Mammary epithelial cell (primary cell): ENCODE measurements at regions of chr3 and their contacts with region 1.

Region 1: GRCh38 chr3:113745273-113746068 is 578 bp downstream of the NAA50 start:
- DNase-seq: peak; percentile 92
- H3K4me3 ChIP-seq: peak overlapping the region; percentile 62 to 97 (median 90)
- H3K27ac ChIP-seq: peak overlapping the region; percentile 97
- H3K4me1 ChIP-seq: peaks cover 32% of the 10 kb centered on the region
- H3K27me3 ChIP-seq: no peaks in the 10 kb centered on the region
- CTCF ChIP-seq: peak; percentile 71 to 73

Region 2: GRCh38 chr3:112773864-112774590 is 971.4 kb before region 1 on chr3:
- CTCF ChIA-PET with region 1: no interaction called
- dilution Hi-C with region 1: no loop called
- in situ Hi-C with region 1: no loop called
- intact Hi-C with region 1: loop called (anchors 10 kb)
- DNase-seq: peak; percentile 97
- H3K4me3 ChIP-seq: no peak overlapping the region
- H3K27ac ChIP-seq: peak overlapping the region; percentile 95
- H3K4me1 ChIP-seq: peaks cover 65% of the 10 kb centered on the region
- H3K27me3 ChIP-seq: no peaks in the 10 kb centered on the region
- CTCF ChIP-seq: no peak

Region 3: GRCh38 chr3:113495035-113495434 is 250.4 kb before region 1 on chr3:
- CTCF ChIA-PET with region 1: interaction called, 4 read pairs
- dilution Hi-C with region 1: no loop called
- in situ Hi-C with region 1: no loop called
- intact Hi-C with region 1: loop called (anchors 1 kb)
- DNase-seq: peak; percentile 27
- H3K4me3 ChIP-seq: no peak overlapping the region
- H3K27ac ChIP-seq: no peak overlapping the region
- H3K4me1 ChIP-seq: no peaks in the 10 kb centered on the region
- H3K27me3 ChIP-seq: no peaks in the 10 kb centered on the region
- CTCF ChIP-seq: peak; percentile 37 to 56

Region 4: DNA sequence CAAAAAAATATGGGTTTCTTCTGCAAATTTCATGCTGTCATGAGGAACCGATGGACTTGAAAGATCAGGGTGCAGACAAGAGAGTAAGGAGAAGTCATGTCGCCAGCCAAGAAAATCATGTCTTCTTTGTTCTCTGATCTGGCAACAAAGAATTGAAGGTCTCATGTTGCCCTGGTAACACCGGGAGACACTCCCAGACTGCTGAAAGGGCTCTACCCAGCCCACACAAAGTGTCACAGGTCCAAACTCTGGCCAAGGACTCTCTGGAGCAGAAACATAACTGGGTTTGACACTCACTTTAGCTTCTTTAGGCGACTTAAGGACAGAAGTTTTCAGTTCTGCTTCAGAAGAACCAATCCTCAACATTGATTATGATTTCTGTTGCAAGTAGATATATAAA is 170.3 kb before region 1 on chr3:
- CTCF ChIA-PET with region 1: interaction called, 5 read pairs
- dilution Hi-C with region 1: no loop called
- in situ Hi-C with region 1: no loop called
- intact Hi-C with region 1: loop called (anchors 1 kb)
- DNase-seq: no peak
- H3K4me3 ChIP-seq: no peak overlapping the region
- H3K27ac ChIP-seq: no peak overlapping the region
- H3K4me1 ChIP-seq: no peaks in the 10 kb centered on the region
- H3K27me3 ChIP-seq: peaks cover 2% of the 10 kb centered on the region
- CTCF ChIP-seq: no peak

Region 5: DNA sequence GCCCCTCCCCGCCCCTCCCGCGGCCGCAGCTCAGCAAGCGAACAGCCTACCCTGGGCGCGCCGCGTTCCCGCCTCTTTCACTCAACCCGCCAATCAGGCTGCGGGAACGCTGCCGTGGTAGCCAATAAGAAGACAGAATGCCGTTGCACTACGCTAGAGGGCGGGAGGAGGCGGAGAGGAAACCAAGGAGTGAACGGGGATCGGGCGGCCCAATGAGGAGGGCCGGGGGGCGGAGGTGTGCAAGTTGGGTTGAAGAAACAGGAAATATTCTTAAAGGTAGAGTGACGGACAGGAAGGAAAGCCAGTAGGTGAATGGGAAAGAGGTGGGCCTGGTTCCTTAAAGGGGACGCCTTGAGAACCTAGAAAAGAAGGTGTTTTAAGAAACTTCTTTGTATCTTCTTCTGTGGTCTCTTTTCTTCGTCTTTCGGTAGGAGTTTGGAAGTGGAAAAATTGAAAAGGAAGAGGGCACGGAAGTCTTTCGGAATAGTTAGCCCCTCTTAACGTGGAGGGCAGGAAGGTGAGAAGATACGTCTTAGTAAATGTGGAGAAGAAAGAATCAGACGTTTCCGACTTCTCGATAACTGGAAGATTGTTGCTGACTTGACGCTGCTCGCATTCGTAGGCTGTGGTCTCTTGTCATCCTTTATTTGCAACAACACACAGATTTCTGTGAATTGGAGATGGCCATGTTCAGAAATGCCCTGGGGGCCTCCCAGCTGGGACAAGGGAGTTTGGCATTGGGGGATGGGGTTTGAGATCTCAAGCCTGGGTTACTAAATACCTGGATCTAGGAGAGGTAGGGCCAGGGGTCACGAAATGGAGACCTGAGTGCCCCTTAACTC is 48.6 kb before region 1 on chr3:
- CTCF ChIA-PET with region 1: no interaction called
- dilution Hi-C with region 1: no loop called
- in situ Hi-C with region 1: no loop called
- intact Hi-C with region 1: loop called (anchors 2 kb)
- DNase-seq: peak; percentile 100
- H3K4me3 ChIP-seq: peak overlapping the region; percentile 76 to 96 (median 88)
- H3K27ac ChIP-seq: peak overlapping the region; percentile 69
- H3K4me1 ChIP-seq: peaks cover 10% of the 10 kb centered on the region
- H3K27me3 ChIP-seq: no peaks in the 10 kb centered on the region
- CTCF ChIP-seq: no peak

Region 6: DNA sequence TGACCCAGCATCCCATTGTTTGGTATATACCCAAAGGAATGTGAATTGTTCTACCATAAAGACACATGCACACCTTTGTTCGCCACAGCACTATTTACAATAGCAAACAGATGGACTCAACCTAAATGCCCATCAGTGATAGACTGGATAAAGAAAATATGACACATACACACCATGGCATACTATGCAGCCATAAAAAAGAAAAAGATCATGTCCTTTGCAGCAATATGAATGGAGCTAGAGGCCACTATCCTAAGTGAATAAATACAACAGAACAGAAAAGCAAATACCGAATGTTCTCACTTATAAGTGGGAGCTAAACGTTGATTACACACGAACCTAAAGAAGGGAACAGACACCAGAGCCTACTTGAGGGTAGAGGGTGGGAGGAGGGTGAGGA is 37.6 kb before region 1 on chr3:
- CTCF ChIA-PET with region 1: no interaction called
- dilution Hi-C with region 1: no loop called
- in situ Hi-C with region 1: no loop called
- intact Hi-C with region 1: no loop called
- DNase-seq: no peak
- H3K4me3 ChIP-seq: no peak overlapping the region
- H3K27ac ChIP-seq: no peak overlapping the region
- H3K4me1 ChIP-seq: peaks cover 9% of the 10 kb centered on the region
- H3K27me3 ChIP-seq: no peaks in the 10 kb centered on the region
- CTCF ChIP-seq: no peak

Region 7: DNA sequence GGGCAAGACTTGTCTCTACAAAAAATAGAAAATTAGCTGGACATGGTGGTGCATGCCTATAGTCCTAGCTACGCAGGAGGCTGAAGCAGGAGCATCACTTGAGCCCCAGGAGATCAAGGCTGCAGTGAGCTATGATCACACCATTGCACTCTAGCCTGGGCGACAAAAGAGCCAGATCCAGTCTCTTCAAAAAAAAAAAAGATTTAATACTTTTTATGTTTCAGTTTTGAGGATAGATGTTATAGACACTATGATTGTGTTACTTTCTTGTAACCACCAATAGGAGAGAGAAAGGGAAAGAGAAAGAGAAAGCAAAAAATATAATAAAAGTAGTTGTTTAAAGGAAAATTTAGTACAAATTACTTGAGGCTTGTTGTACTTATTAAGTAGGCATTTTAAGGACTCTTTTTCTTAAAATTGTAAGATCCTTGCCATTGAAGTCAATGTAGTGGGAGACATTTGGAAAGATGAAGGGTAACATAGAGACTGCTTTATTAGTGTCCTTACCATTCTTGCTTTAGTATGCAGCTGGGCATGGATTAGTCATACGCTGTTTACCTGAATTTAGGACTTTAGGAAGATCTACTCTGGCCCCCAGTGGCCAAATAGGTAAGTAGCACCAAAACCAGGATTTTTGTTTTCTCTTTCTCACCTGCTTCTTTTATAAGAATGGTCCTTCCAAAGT is 167.2 kb after region 1 on chr3:
- CTCF ChIA-PET with region 1: no interaction called
- dilution Hi-C with region 1: no loop called
- in situ Hi-C with region 1: loop called in 1 of 2 experiments (anchors 5 kb)
- intact Hi-C with region 1: no loop called
- DNase-seq: peak; percentile 78
- H3K4me3 ChIP-seq: no peak overlapping the region
- H3K27ac ChIP-seq: no peak overlapping the region
- H3K4me1 ChIP-seq: no peaks in the 10 kb centered on the region
- H3K27me3 ChIP-seq: no peaks in the 10 kb centered on the region
- CTCF ChIP-seq: peak; percentile 85 to 87